ENCODE measurements at regions of chr1 and their contacts with region 1.

Region 1: DNA sequence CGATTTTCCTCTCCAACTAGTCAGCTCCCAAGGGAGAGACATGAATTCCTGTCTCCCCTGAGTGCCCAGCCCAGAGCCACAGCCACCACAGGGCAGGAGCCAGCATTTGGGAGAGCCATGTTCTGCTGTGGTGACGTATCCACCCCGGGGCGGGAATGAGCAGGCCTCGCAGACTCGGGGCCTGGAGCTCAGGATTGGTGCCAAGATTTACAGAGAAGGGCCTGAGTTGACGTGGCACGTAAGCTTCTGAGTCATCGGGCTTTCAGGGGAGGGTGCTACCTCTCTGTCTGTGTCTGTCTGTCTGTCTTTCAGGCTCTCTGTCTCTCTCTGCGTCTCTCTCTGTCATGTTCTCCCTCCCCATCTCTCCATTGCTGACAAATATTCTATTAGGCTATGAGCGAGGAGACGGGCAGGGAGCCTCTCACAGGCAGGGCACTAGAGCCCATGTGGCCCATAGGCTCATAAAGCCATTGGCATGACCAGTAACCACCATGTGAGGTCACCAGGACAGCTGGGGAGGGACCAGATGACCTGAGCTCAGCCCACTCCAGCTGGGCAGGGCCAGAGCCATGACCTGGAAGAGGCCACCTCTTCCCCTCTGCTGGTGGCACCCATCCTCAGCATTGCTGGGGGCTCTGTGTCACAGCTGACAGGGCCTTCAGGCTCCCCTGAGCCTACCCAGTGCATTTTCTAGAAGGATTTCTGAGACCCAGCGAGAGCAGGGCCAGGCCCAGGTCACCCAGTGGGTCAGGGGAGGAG is 300.0 kb upstream of the VAMP3 start:
- DNase-seq: peak; percentile 98
- H3K4me3 ChIP-seq: no peak overlapping the region
- H3K27ac ChIP-seq: peak overlapping the region; percentile 70
- H3K4me1 ChIP-seq: peaks cover 38% of the 10 kb centered on the region
- H3K27me3 ChIP-seq: no peaks in the 10 kb centered on the region
- CTCF ChIP-seq: no peak

Region 2: DNA sequence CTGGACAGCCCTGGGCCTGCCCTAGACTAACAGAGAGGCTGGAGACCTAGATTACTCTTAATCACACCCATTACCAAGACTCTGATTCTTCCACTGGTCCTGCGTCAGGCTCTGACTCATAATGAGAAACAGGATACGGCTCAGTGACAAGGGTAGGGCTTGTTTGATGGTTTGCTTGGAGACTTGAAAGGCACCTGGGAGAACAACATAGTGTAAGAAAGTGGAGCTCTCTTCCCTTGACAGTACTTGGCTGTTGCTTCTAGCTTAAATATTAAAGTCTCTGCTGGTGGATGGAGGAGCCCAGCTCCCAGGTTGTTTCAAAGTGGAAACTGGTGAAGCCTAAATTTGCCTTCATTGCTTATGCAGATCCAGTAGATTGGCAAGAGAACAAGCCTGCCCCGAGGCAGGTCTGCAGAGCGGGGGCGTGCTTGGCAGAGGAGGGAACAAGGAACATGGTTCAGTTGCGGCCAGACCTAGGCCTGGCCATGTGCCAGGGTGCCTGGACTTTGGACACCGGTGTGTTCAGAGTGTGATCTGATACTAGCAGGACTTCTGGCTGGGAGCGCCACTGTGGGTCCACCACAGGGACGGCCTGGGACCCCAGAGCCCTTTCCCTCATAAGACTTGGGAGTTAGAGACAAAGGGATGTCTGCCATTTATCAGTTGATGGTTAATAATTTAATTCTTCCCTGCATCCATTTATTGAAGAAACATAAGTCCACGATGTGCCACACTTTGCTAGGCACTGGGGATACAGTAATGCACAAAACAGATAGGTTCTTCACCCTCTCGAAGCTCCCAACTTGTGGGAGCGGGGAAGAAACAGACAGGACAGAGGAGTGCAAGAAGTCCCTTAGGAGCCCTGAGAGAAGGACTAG is 205.0 kb before region 1 on chr1:
- CTCF ChIA-PET with region 1: no interaction called
- dilution Hi-C with region 1: no loop called
- in situ Hi-C with region 1: no loop called
- intact Hi-C with region 1: loop called (anchors 10 kb)
- DNase-seq: peak; percentile 98
- H3K4me3 ChIP-seq: peak overlapping the region in 2 of 3 experiments; percentile 9 to 12
- H3K27ac ChIP-seq: peak overlapping the region; percentile 94
- H3K4me1 ChIP-seq: peaks cover 35% of the 10 kb centered on the region
- H3K27me3 ChIP-seq: no peaks in the 10 kb centered on the region
- CTCF ChIP-seq: no peak

Region 3: DNA sequence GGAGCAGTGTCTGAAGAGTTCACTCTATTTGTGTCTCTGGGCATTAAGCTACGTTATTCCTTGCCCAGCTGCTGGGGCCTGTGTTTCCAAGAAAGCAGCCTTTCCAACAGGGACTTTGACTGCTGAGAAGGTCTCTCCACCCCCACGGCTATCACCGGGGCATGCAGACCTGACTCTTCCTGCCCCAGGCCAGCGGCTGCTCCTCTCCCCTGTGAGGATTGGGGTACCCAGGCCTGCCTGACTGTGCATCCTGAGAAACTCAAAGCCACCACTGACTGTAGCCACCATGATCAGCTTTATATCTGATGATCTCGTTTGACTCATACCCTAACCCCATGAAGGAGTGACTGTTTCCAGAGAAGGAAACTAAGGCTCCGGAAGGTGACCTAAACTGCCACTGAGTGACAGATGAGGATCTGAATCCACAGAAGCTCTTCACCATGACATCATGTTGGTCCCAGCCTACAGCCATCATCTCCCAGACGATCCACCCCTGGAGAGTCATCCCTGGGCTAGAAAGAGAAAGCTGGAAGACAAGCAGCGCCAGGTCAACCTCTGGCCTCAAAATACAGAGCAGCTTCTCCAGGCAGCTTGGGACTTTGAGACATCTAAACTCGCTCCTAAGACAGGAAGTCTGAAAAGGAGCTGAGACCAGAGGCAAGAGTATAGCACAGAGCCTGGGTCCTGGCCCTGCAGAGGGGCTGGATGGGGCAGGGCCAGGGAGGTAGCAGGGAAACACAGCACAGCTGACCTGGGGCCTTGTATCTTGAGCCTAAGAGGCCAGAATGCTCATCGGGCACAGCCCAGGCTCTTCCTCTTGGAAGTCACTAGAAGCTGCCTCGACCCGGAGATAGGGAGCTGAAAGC is 56.0 kb after region 1 on chr1:
- CTCF ChIA-PET with region 1: interaction called, 3 read pairs
- dilution Hi-C with region 1: no loop called
- in situ Hi-C with region 1: no loop called
- intact Hi-C with region 1: loop called (anchors 5 kb)
- DNase-seq: peak; percentile 14
- H3K4me3 ChIP-seq: no peak overlapping the region
- H3K27ac ChIP-seq: no peak overlapping the region
- H3K4me1 ChIP-seq: peaks cover 17% of the 10 kb centered on the region
- H3K27me3 ChIP-seq: no peaks in the 10 kb centered on the region
- CTCF ChIP-seq: no peak

Measured in mammary epithelial cell (primary cell).